Mammary epithelial cell (primary cell): ENCODE measurements at regions of chr1 and their contacts with region 1.

Region 1: GRCh38 chr1:98216304-98216703 is 295.5 kb upstream of the DPYD start:
- DNase-seq: no peak
- H3K4me3 ChIP-seq: no peak overlapping the region
- H3K27ac ChIP-seq: no peak overlapping the region
- H3K4me1 ChIP-seq: no peaks in the 10 kb centered on the region
- H3K27me3 ChIP-seq: no peaks in the 10 kb centered on the region
- CTCF ChIP-seq: no peak

Region 2: GRCh38 chr1:98164509-98164908 is 51.8 kb before region 1 on chr1:
- CTCF ChIA-PET with region 1: no interaction called
- dilution Hi-C with region 1: loop called (anchors 5 kb)
- in situ Hi-C with region 1: no loop called
- intact Hi-C with region 1: no loop called
- DNase-seq: no peak
- H3K4me3 ChIP-seq: no peak overlapping the region
- H3K27ac ChIP-seq: no peak overlapping the region
- H3K4me1 ChIP-seq: no peaks in the 10 kb centered on the region
- H3K27me3 ChIP-seq: no peaks in the 10 kb centered on the region
- CTCF ChIP-seq: no peak

Region 3: GRCh38 chr1:98323906-98324358 is 107.6 kb after region 1 on chr1:
- CTCF ChIA-PET with region 1: no interaction called
- dilution Hi-C with region 1: no loop called
- in situ Hi-C with region 1: no loop called
- intact Hi-C with region 1: no loop called
- DNase-seq: peak; percentile 89
- H3K4me3 ChIP-seq: no peak overlapping the region
- H3K27ac ChIP-seq: peak overlapping the region; percentile 97
- H3K4me1 ChIP-seq: peaks cover 53% of the 10 kb centered on the region
- H3K27me3 ChIP-seq: no peaks in the 10 kb centered on the region
- CTCF ChIP-seq: no peak